Psoas muscle (tissue), 8 donors: ENCODE measurements at regions of chr6 and their contacts with region 1.

Region 1: DNA sequence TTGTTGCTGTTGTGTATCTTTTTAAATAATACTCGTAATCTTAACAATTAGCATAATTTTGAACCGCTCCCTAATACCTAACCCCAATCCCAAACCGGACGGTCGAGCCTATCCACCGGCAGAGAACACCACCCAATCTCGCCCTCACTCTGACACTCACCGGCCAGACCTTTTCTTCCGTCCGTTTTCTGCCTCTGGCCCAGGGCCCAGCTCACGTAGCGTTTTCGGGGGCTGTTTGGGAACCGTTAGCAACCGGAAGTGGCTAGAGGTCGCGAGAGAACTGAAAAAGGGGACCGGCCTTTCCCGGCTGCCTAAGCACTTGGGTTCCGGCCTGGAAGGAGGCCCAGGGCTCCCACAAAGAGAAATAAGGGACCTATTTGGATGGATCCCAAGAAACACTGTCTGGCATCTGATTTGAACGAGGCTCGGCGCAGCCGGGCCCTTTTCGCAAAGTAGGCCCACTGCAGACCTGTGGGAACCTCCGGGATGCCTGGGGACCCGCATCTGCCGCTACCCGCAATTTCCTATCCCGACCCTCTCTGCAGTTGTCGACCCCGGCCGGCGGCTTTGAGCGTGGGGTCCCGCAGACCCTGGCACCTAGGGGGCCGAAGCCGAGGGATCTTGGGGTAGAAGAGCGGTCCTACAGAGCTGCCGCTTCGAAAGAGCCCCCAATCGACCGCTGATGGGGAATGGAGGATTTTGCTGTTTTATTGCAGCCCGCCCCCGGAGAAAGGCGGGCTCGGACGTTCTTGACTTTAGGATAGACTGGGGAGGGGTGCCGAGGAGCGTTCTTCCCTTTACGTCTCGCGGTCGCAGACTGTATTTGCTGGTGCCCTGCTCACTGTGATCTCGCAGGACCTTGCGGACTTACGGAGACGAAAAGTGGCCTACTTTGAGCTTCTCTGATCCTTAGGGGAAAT is 4.8 kb upstream of the ZKSCAN8 start:
- DNase-seq: peak; percentile 91 to 96
- ATAC-seq: peak; percentile 92 to 94 (median 93)
- H3K4me3 ChIP-seq: peak overlapping the region; percentile 90
- H3K27ac ChIP-seq: peak overlapping the region; percentile 90
- H3K4me1 ChIP-seq: peaks cover 13% of the 10 kb centered on the region
- H3K27me3 ChIP-seq: no peaks in the 10 kb centered on the region
- CTCF ChIP-seq: no peak

Region 2: DNA sequence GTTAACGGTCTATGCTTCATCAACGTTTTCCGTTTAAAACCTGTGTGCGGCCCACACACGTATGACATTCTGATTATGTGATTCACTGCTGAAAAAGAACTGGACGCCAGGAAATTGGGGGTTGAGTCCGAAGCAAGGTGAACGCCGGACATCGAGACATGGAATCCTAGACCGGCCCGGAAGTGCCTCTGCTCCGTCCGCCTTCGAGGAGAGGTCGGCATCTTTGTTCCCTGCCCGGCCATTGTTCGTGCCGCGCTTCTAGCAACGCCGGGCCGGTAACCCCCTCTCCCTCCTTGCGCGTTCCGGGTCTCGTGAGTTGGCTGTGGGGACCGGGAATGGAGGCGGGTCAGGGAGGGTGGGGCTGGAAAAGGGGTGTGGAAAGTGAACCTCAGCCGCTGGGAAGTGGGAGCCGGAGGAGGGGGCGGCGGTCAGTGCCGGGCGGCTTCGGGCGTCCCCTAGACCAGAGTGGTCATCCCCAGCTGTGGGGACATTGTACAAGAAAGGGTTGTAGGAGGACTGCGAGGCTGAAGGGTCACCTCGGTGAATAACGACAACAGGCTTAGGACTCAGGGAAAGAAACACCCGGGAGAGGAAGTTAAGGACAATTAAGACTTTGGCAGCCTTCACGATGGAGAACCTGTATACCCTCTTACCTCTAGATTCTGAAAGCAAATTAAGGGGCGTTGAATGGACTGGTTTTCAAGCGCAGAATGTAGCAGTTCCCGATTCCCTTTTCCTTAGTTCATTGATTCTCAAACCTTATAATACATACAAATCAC is 88.4 kb after region 1 on chr6 and contains the start of gene ZSCAN9:
- intact Hi-C with region 1: loop called (anchors 5 kb)
- DNase-seq: peak; percentile 88 to 93
- ATAC-seq: peak; percentile 95 to 99 (median 98)
- H3K4me3 ChIP-seq: peak within 1 kb of the TSS; percentile 84
- H3K27ac ChIP-seq: peak within 1 kb of the TSS; percentile 62
- H3K4me1 ChIP-seq: peaks cover 10% of the 10 kb centered on the region
- H3K27me3 ChIP-seq: peaks cover 0 to 9% (median 1%) of the 10 kb centered on the region in 3 donors
- CTCF ChIP-seq: no peak
- total RNA-seq, gene ZSCAN9: 5.2 to 6.9 (median 6.3) TPM

Region 3: DNA sequence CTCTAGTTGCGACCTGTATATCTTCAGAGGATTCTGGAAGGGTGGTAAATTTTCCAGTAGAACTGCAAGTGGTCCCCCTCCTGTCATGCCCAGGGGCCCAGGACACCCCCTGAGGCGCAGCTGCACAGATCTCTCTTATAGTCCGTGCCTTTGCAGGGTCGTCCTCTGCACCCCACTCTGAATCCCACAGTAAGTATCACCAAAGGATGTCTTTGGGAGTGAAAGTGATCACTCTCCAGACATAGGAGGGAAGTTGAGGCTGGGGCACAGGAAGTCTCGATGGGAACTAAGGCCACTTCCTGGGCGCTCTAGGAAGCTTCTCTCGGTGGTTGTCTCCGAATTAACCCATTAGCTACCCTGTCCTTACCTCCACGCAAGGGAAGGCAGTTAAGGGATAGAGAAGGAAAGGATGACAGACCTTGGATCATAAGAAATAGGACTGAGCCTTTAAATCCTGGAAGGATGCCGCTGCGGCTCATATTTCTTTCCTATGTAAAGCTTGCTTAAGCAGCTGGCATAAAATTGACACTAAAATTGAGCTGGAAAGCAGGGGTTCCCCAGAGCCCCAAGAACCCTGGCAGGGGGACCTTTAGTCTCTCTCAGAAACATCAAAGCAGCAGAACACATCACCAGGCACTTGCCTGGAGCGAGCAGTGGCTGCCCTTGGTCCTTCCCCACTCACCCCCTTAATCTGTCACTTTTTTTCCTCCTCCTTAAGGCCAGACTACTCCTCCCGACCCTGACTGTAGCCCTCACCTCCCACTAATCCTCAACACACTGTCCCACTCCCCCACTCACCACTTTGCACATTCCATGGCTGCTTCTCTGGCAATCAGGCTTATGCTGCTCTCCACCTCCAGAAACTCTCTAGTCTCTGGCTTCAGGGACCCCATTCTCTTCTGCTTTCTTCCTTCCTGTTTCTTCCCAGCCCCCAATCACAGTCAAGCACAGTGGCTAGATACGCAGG is 115.4 kb after region 1 on chr6 and contains the start of gene ZKSCAN4:
- intact Hi-C with region 1: loop called (anchors 1 to 5 kb)
- DNase-seq: peak; percentile 77 to 84
- ATAC-seq: peak; percentile 85 to 100 (median 98)
- H3K4me3 ChIP-seq: peak within 1 kb of the TSS; percentile 80
- H3K27ac ChIP-seq: peak within 1 kb of the TSS; percentile 61
- H3K4me1 ChIP-seq: peaks cover 7% of the 10 kb centered on the region
- H3K27me3 ChIP-seq: no peaks in the 10 kb centered on the region
- CTCF ChIP-seq: no peak
- total RNA-seq, gene ZKSCAN4: 1.0 to 2.2 (median 1.8) TPM

Region 4: GRCh38 chr6:28266962-28267694 is 130.3 kb after region 1 on chr6 and contains the start of gene ZSCAN26:
- intact Hi-C with region 1: loop called in 1 of 2 experiments (anchors 5 kb)
- DNase-seq: peak; percentile 88 to 93
- ATAC-seq: peak; percentile 95 to 99 (median 97)
- H3K4me3 ChIP-seq: peak within 1 kb of the TSS; percentile 77
- H3K27ac ChIP-seq: peak within 1 kb of the TSS; percentile 78
- H3K4me1 ChIP-seq: peaks cover 27% of the 10 kb centered on the region
- H3K27me3 ChIP-seq: no peaks in the 10 kb centered on the region
- CTCF ChIP-seq: no peak
- total RNA-seq, gene ZSCAN26: 6.9 to 12.9 (median 10.1) TPM

Region 5: DNA sequence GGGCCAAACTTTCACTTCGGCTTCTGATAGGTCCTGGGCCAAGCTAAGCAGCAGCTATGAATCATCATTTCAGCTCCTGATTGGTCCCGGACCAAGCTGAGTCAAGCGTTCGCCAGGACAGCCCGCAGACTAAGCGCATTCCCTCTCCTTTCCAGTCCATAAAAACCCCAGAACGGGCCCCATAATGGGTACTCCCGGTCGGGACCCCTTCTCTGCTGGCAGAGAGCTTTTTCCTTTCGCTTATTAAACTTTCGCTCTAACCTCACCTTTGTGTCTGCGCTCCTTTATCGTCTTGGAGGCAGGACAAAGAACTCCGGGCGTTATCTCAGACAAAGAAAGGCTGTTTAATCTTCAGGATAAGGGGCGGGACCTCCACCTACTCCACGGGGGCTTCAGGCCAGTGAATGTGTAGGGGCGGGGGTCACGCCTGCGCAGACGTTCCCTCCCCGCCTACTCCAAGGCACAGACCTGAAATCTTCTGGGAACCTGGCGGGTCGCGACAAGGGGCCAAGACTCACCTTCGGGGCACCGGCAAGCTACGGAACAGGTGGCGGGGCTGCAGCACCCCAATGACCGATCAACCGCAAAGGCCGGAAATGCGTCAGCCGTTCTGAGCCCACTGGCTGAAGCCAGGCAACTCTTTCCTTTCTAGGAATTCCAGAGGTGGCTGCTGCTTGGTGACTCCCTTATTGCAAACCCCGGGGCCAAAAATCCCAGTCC is 198.9 kb after region 1 on chr6 and contains the start of gene ZSCAN31:
- intact Hi-C with region 1: loop called in 1 of 2 experiments (anchors 5 kb)
- DNase-seq: peak; percentile 91 to 95
- ATAC-seq: peak; percentile 96 to 98 (median 98)
- H3K4me3 ChIP-seq: peak within 1 kb of the TSS; percentile 90
- H3K27ac ChIP-seq: peak within 1 kb of the TSS; percentile 96
- H3K4me1 ChIP-seq: peaks cover 8% of the 10 kb centered on the region
- H3K27me3 ChIP-seq: no peaks in the 10 kb centered on the region
- CTCF ChIP-seq: no peak
- total RNA-seq, gene ZSCAN31: 4.8 to 10.8 (median 7.7) TPM